MCF 10A (cell line): ENCODE measurements at regions of chr1 and their contacts with region 1.

Region 1: GRCh38 chr1:209784265-209785169 is at the start of gene C1orf74:
- DNase-seq: peak; percentile 100
- H3K4me3 Mint-ChIP-seq: peak within 1 kb of the TSS; percentile 90
- H3K27ac Mint-ChIP-seq: peak within 1 kb of the TSS; percentile 96
- H3K4me1 Mint-ChIP-seq: peaks cover 22% of the 10 kb centered on the region
- H3K27me3 Mint-ChIP-seq: no peaks in the 10 kb centered on the region
- CTCF ChIP-seq: no peak
- total RNA-seq, gene C1orf74: 6.8 and 7.1 TPM in 2 replicates

Region 2: GRCh38 chr1:209769171-209769904 is 15.2 kb before region 1 on chr1:
- CTCF ChIA-PET with region 1: interaction called, 11 read pairs
- POLR2A ChIA-PET with region 1: interaction called, 40 read pairs
- intact Hi-C with region 1: no loop called
- DNase-seq: peak; percentile 97
- H3K4me3 Mint-ChIP-seq: no peak overlapping the region
- H3K27ac Mint-ChIP-seq: no peak overlapping the region
- H3K4me1 Mint-ChIP-seq: peaks cover 17% of the 10 kb centered on the region
- H3K27me3 Mint-ChIP-seq: no peaks in the 10 kb centered on the region
- CTCF ChIP-seq: no peak

Region 3: GRCh38 chr1:209797978-209798639 is 13.6 kb after region 1 on chr1:
- CTCF ChIA-PET with region 1: interaction called, 8 read pairs
- POLR2A ChIA-PET with region 1: interaction called, 55 read pairs
- intact Hi-C with region 1: no loop called
- DNase-seq: peak; percentile 74
- H3K4me3 Mint-ChIP-seq: peak overlapping the region; percentile 17
- H3K27ac Mint-ChIP-seq: no peak overlapping the region
- H3K4me1 Mint-ChIP-seq: peaks cover 28% of the 10 kb centered on the region
- H3K27me3 Mint-ChIP-seq: no peaks in the 10 kb centered on the region
- CTCF ChIP-seq: no peak

Region 4: GRCh38 chr1:209805875-209806760 is 21.6 kb after region 1 on chr1 and contains the start of gene IRF6:
- CTCF ChIA-PET with region 1: interaction called, 18 read pairs
- POLR2A ChIA-PET with region 1: interaction called, 142 read pairs
- intact Hi-C with region 1: no loop called
- DNase-seq: peak; percentile 99
- H3K4me3 Mint-ChIP-seq: peak within 1 kb of the TSS; percentile 90
- H3K27ac Mint-ChIP-seq: peak within 1 kb of the TSS; percentile 92
- H3K4me1 Mint-ChIP-seq: peaks cover 74% of the 10 kb centered on the region
- H3K27me3 Mint-ChIP-seq: no peaks in the 10 kb centered on the region
- CTCF ChIP-seq: no peak
- total RNA-seq, gene IRF6: 87.8 and 106 TPM in 2 replicates

Region 5: DNA sequence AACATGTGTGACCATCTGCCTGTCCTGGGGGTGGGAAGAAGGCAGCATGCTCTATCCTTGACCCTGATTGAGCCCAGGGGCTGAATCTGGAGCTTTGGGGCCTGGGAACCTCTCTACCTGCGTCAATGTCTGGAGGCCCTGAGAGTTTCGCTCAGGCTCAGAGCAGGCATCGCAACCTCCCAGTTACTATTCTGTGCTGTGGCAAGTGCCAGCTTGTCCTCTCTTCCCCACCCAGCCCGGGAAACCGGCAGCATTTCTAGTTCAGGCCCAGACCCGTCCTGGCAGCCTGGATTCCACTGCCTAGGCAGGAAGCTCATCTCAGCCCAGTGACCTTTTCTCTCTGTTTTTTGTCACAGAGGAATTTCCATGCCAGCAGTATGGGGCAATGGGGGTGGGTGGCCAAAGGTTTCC is 31.4 kb after region 1 on chr1:
- CTCF ChIA-PET with region 1: interaction called, 9 read pairs
- POLR2A ChIA-PET with region 1: interaction called, 67 read pairs
- intact Hi-C with region 1: no loop called
- DNase-seq: peak; percentile 100
- H3K4me3 Mint-ChIP-seq: peak overlapping the region; percentile 44
- H3K27ac Mint-ChIP-seq: peak overlapping the region; percentile 91
- H3K4me1 Mint-ChIP-seq: peaks cover 29% of the 10 kb centered on the region
- H3K27me3 Mint-ChIP-seq: no peaks in the 10 kb centered on the region
- CTCF ChIP-seq: no peak